Posterior cingulate gyrus (tissue), 11 donors: ENCODE measurements at regions of chr17 and their contacts with region 1.

Region 1: DNA sequence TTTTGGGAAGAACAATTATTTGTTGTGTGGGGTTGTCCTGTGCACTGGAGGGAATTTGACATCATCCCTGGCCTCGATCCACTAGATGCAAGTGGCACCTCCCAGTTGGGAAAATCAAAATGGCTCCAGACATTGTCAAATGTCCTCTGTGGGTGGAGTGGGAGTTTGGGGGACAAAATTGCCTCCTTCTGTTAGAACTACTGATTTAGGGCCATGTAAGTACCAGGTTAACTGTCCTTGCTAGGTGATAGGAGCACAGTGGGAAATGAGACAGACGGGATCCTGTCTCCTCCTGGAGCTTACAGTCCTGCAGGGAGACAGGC is 56.8 kb downstream of the ARHGAP23 start:
- DNase-seq: no peak

Region 2: GRCh38 chr17:37465069-37465616 is 1020.0 kb before region 1 on chr17:
- intact Hi-C with region 1: no loop called
- DNase-seq: no peak

Region 3: DNA sequence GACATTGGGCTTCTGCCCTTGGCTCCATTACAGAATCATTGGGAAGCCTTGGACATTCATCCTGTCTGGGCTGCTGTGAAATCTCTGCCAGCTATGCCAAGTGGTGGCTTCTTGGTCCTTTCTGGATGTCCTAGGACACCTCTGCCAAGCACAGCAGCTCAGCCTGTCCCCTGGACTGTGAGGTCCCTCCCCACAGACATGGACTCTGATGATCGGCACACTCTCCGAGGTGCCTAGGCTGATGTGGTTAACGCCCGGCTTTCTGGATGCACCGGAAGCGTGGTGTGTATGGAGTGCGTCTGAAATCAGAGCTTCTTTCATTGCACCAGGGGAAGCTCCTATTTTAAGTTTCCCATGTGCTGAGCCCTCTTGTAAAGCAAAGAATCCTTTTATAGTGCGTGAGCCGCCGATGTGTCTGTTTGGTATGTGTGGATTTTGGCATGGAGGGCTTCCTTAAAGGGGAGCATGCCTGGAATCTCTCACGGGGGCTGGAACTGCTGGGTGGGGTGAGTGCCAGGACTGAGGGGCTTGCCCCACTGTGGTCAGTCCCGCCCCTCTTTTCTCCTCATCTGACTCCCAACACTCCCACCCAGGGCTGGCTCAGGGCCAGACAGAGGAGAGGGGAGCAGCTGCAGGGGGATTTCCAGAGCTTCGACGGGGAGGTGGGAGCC is 63.8 kb before region 1 on chr17:
- intact Hi-C with region 1: loop called (anchors 5 kb)
- DNase-seq: peak in 3 of 10 donors; percentile 14 to 80 (median 75)

Region 4: DNA sequence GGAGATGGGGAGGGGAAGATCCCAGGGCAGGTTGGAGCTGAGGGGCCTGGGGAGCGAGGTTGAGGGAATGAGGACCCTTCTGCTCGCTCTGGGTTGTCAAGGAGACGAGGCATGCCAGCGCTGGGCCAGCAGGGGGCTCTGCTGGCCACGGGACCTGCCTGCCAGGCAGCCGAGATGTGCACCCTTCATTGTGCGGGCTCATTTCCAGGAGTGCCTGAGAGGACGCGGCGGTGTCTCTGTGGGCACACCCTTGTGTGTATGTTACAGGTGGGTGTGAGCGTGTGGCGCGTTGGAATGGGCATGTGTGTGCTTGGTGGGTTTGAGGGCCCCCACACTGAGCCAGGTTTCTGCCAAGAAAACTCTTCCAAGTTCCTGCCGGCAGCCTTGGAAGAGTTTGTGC is 41.0 kb before region 1 on chr17:
- intact Hi-C with region 1: loop called (anchors 5 kb)
- DNase-seq: peak; percentile 60 to 96 (median 76)